Heart left ventricle (tissue), 16 donors: ENCODE measurements at regions of chr15 and their contacts with region 1.

Region 1: DNA sequence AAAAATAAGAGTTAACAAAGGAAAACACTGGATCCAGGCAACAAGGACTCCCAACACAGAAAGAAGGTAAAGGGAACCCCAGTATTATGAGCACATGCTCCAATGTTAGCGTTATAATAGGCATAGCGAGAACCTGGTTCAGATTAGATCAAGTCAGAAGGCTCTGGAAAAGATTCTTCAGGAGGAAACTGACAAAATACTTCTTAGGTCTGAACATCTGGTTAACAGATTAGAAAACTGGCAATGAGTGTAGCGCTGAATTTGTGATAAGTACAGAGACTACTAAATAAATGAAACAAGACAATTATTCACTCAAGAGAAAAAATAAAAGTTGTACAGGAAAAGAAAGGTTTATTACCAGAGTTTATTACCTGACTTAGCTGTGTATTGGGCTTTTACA is 146.1 kb downstream of the DPH6 start:
- DNase-seq: no peak
- ATAC-seq: no peak
- H3K4me3 ChIP-seq: no peak overlapping the region
- H3K27ac ChIP-seq: no peak overlapping the region
- H3K4me1 ChIP-seq: peaks cover 0 to 1% (median 0%) of the 10 kb centered on the region in 12 donors
- H3K27me3 ChIP-seq: no peaks in the 10 kb centered on the region
- CTCF ChIP-seq: no peak
- POLR2A ChIP-seq: no peak

Region 2: GRCh38 chr15:35383511-35383910 is 16.4 kb before region 1 on chr15:
- intact Hi-C with region 1: loop called in 1 of 10 experiments (anchors 2 kb)
- DNase-seq: no peak
- ATAC-seq: no peak
- H3K4me3 ChIP-seq: no peak overlapping the region
- H3K27ac ChIP-seq: no peak overlapping the region
- H3K4me1 ChIP-seq: no peaks in the 10 kb centered on the region
- H3K27me3 ChIP-seq: no peaks in the 10 kb centered on the region
- CTCF ChIP-seq: no peak
- POLR2A ChIP-seq: no peak